ENCODE measurements at regions of chr20 and their contacts with region 1.

Region 1: GRCh38 chr20:62352402-62353288 is 14.5 kb downstream of the LAMA5 start:
- DNase-seq: peak; percentile 50 to 97 (median 78)
- H3K4me3 ChIP-seq: peak overlapping the region in 2 of 59 donors; percentile 7 to 18
- H3K27ac ChIP-seq: peak overlapping the region in 35 of 59 donors; percentile 3 to 76 (median 50)
- H3K27me3 ChIP-seq: no peaks in the 10 kb centered on the region
- CTCF ChIP-seq: peak in 52 of 56 donors; percentile 19 to 67 (median 49)

Region 2: GRCh38 chr20:61965606-61966491 is 386.8 kb before region 1 on chr20:
- intact Hi-C with region 1: no loop called
- DNase-seq: peak in 3 of 10 donors; percentile 11 to 39 (median 15)
- H3K4me3 ChIP-seq: peak overlapping the region in 29 of 59 donors; percentile 3 to 45 (median 28)
- H3K27ac ChIP-seq: no peak overlapping the region
- H3K27me3 ChIP-seq: peaks cover 0 to 19% (median 0%) of the 10 kb centered on the region in 45 donors
- CTCF ChIP-seq: no peak

Region 3: DNA sequence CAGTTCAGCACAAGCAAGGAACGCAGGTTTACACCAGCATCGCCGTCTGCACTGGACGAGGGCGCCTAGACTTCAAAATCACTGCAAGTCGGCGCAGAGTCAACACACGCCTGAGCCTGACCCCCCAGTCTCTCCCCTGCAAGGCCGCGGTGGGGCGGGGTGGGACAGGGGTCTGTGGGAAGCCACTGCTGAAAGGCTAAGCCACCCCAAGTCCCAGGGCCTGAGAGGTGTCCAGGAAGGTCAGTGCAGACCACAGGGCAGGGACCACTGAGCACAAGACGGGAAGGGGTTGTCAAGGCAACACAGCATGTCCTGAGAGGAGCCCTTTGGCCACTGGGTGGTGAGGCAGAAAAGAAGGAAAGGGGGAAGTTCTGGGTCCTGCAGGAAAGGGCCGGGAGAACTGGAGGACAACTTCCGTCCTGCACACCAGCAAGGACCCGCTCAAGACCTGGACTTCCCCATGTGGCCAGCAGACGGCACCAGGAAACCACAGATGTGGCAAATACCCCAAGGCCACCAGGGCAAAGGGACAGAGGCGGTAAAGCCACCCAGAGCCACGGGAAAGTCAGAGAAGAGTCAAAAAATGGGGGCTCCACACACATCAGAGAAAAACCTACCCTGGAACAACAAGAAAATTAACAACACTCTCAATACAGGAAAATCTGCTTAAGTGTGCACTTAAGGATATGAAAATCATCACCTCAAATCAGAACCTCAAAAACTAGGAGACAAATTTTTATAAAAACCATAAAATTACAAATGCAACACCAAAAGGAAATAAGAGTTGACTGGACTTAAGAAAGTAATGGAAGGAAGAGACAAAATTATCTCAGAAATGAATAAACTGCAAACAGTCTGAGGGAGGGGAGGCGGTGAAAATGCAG is 371.7 kb before region 1 on chr20:
- intact Hi-C with region 1: no loop called
- DNase-seq: peak in 1 of 10 donors; percentile 18
- H3K4me3 ChIP-seq: no peak overlapping the region
- H3K27ac ChIP-seq: no peak overlapping the region
- H3K27me3 ChIP-seq: no peaks in the 10 kb centered on the region
- CTCF ChIP-seq: peak in 36 of 56 donors; percentile 12 to 64 (median 30)

Region 4: GRCh38 chr20:62386383-62387218 is 34.0 kb after region 1 on chr20 and contains the start of gene RPS21:
- intact Hi-C with region 1: loop called in 1 of 2 experiments (anchors 2 kb)
- DNase-seq: peak; percentile 79 to 94 (median 88)
- H3K4me3 ChIP-seq: peak within 1 kb of the TSS; percentile 71 to 100 (median 96)
- H3K27ac ChIP-seq: peak within 1 kb of the TSS; percentile 16 to 97 (median 88)
- H3K27me3 ChIP-seq: no peaks in the 10 kb centered on the region
- CTCF ChIP-seq: peak in 26 of 56 donors; percentile 8 to 52 (median 34)
- total RNA-seq, gene RPS21: 411 to 983 (median 581) TPM

Region 5: DNA sequence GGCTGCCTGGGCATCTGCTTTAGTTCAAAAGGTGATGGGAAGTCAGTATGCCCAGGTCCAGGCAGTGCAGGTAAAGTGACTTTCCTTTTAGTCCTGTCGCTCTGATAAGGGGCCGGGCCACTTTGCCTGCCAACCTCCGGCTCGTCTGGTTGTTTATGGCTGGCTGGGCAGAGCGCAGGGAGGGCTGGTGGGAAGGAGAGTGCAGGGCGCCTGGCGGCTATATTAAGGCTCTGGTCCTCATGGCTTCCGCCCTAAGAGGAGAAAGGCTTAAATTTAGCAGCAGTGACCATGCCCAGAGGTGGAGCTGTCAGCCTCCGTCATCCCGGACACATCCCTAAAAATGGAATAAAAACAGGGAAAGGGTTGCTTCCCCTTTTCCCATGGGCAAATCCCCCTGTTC is 108.5 kb after region 1 on chr20:
- intact Hi-C with region 1: no loop called
- DNase-seq: no peak
- H3K4me3 ChIP-seq: no peak overlapping the region
- H3K27ac ChIP-seq: no peak overlapping the region
- H3K27me3 ChIP-seq: peaks cover 0 to 10% (median 0%) of the 10 kb centered on the region in 45 donors
- CTCF ChIP-seq: no peak

Measured in dorsolateral prefrontal cortex (tissue), 120 donors.